H1 (cell line): ENCODE measurements at regions of chr1 and their contacts with region 1.

Region 1: DNA sequence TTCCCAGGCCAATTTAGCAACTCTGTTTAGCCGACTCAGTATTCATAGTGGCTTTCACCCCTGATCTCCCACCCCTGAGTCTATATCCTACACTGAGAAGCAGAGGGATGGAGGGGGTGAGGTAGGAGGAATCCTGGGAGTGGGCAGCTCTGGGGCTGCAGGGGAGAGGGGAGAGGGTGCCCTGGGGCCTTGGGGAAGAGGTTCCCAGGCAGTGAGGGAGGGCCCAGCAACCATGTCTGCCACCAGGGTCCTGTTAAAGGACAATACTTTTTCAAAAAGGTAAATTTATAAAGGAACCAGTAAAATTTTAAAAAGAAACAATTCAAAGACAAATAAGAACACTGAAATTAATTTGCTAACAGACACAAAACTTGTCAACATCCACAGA is 30.3 kb downstream of the EPHX1 start:
- DNase-seq: no peak
- H3K4me3 ChIP-seq: no peak overlapping the region
- H3K27ac ChIP-seq: no peak overlapping the region
- H3K4me1 ChIP-seq: no peaks in the 10 kb centered on the region; a peak in 1 of 7 replicates
- H3K27me3 ChIP-seq: no peaks in the 10 kb centered on the region
- CTCF ChIP-seq: no peak
- EP300 ChIP-seq: no peak
- POLR2A ChIP-seq: no peak
- RAD21 ChIP-seq: no peak

Region 2: GRCh38 chr1:225642177-225642576 is 198.0 kb before region 1 on chr1:
- CTCF ChIA-PET with region 1: no interaction called
- POLR2A ChIA-PET with region 1: no interaction called
- DNase-seq: no peak
- H3K4me3 ChIP-seq: no peak overlapping the region
- H3K27ac ChIP-seq: no peak overlapping the region; the same call in 1 of the 2 replicates
- H3K4me1 ChIP-seq: peaks cover 0 to 3% (median 0%) of the 10 kb centered on the region in 4 experiments; a peak in 1 of 7 replicates
- H3K27me3 ChIP-seq: no peaks in the 10 kb centered on the region
- CTCF ChIP-seq: no peak
- EP300 ChIP-seq: no peak
- POLR2A ChIP-seq: no peak
- RAD21 ChIP-seq: no peak

Region 3: DNA sequence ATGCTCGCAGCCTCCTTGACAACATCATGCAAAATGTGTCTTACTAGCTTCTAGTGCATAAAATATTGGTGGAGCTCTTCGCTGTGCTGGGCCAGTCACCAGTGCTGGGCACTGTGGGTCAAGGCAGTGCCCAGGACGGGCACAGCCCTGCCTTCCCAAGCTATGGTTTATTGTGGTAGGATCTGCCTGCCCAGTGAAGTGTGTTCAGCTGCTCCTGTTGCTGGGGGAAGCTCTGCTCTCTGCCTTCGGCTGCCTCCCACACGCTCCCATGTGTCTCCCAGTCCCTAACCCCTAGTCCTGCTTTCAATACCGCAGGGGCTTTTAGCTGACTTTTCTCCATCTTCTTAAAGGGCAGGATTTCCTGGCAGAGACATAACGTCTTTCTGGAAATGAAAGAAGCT is 14.6 kb before region 1 on chr1:
- CTCF ChIA-PET with region 1: interaction called, 16 read pairs
- POLR2A ChIA-PET with region 1: interaction called, 15 read pairs
- DNase-seq: no peak
- H3K4me3 ChIP-seq: no peak overlapping the region
- H3K27ac ChIP-seq: no peak overlapping the region
- H3K4me1 ChIP-seq: peaks cover 6 to 17% (median 11%) of the 10 kb centered on the region in 4 experiments; a peak in 6 of 7 replicates
- H3K27me3 ChIP-seq: no peaks in the 10 kb centered on the region
- CTCF ChIP-seq: no peak
- EP300 ChIP-seq: no peak
- POLR2A ChIP-seq: no peak
- RAD21 ChIP-seq: no peak